ENCODE measurements at regions of chr10 and their contacts with region 1.

Region 1: DNA sequence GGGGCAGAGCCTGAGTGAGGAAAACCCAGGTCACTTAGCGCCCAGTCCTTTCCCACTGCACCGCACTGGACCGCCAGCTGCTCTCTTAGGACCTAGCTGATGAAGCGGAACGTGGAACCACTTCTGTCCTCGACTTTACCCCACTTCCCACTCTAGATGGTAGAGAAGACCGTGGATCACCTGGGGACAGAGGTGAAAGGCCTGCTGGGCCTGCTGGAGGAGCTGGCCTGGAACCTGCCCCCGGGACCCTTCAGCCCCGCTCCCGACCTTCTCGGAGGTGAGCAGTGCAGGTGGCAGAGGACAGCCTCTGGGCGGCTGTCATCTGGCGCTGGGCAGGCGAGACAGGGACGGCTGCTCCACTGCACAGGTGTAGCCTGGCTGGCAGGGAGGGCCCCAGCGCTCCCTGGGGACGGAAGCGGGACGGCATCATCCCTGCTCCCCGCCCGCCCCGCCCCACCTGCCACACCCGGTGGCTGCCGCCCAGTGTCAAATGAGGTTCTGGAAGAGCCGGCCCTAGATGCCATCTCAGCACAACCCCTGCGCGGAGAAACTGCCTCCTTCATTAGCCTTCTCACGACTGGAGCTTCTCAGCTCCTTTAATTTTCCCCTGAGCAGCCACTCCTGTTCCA is 11.7 kb downstream of the PLAC9 start:
- DNase-seq: peak in 4 of 10 donors; percentile 4 to 33 (median 17)
- ATAC-seq: peak; percentile 56 to 67
- H3K4me3 Mint-ChIP-seq: peak overlapping the region; percentile 79 to 93 (median 86)
- H3K27ac Mint-ChIP-seq: peak overlapping the region; percentile 78 to 96 (median 90)
- H3K4me1 Mint-ChIP-seq: peaks cover 15 to 24% (median 20%) of the 10 kb centered on the region in 4 donors
- H3K27me3 Mint-ChIP-seq: peaks cover 0 to 16% (median 4%) of the 10 kb centered on the region in 5 donors

Region 2: DNA sequence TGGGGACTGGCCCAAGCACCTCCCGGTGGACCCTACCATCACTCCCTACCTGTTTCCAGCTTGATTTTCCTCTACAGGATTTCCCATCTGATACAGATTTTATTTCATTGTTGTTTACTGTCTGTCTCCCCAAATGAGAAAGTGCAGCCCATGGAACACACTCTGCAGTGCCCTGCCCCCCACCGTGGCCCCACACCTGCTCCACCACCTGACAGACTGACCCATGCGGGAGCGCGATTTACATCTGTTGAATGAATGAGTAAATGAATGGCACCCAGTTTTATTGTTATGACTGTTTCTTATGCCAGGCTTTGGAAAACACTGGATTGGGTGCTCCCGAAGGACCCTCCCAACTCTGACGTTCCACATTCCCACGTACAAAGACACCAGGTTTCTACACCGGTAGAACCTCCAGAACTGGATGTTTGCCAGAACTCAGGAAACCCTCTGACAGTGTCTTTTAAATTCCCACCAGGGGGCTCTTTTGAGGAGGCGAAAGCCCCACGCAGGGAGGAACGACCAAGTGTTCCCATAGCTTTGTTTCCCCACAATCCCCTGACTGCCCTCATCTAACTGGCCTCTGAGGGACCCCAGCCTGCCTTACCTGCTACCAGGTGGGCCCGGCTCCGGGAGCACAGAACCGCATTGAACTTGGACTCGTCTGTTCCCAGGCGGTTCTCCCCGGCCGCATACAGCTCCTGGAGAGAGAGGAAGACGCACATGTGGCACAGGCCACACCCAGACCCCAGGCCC is 17.3 kb after region 1 on chr10:
- POLR2A ChIA-PET with region 1: no interaction called
- DNase-seq: peak in 5 of 10 donors; percentile 14 to 29 (median 19)
- ATAC-seq: no peak
- H3K4me3 Mint-ChIP-seq: no peak overlapping the region
- H3K27ac Mint-ChIP-seq: peak overlapping the region in 9 of 10 donors; percentile 10 to 93 (median 74)
- H3K4me1 Mint-ChIP-seq: peaks cover 4 to 32% (median 13%) of the 10 kb centered on the region in 4 donors
- H3K27me3 Mint-ChIP-seq: no peaks in the 10 kb centered on the region

Region 3: GRCh38 chr10:80187465-80188409 is 43.6 kb after region 1 on chr10:
- POLR2A ChIA-PET with region 1: interaction called, 22 read pairs
- DNase-seq: peak; percentile 66 to 97 (median 87)
- ATAC-seq: peak; percentile 91 to 93
- H3K4me3 Mint-ChIP-seq: peak overlapping the region; percentile 68 to 92 (median 78)
- H3K27ac Mint-ChIP-seq: peak overlapping the region; percentile 93 to 98 (median 96)
- H3K4me1 Mint-ChIP-seq: peaks cover 46 to 92% (median 89%) of the 10 kb centered on the region in 4 donors
- H3K27me3 Mint-ChIP-seq: no peaks in the 10 kb centered on the region

Measured in naive thymus-derived CD8-positive, alpha-beta T cell (primary cell).